ENCODE measurements at regions of chr2 and their contacts with region 1.

Region 1: GRCh38 chr2:135203944-135204343 is 151.9 kb downstream of the RAB3GAP1 start:
- DNase-seq: no peak
- ATAC-seq: no peak
- H3K4me3 ChIP-seq: no peak overlapping the region
- H3K27ac ChIP-seq: no peak overlapping the region
- H3K4me1 ChIP-seq: no peaks in the 10 kb centered on the region
- H3K27me3 ChIP-seq: no peaks in the 10 kb centered on the region
- CTCF ChIP-seq: no peak

Region 2: GRCh38 chr2:135154962-135155361 is 49.0 kb before region 1 on chr2:
- CTCF ChIA-PET with region 1: no interaction called
- POLR2A ChIA-PET with region 1: interaction called, 10 read pairs
- in situ Hi-C with region 1: no loop called
- intact Hi-C with region 1: no loop called
- DNase-seq: no peak
- ATAC-seq: no peak
- H3K4me3 ChIP-seq: no peak overlapping the region
- H3K27ac ChIP-seq: no peak overlapping the region
- H3K4me1 ChIP-seq: no peaks in the 10 kb centered on the region
- H3K27me3 ChIP-seq: no peaks in the 10 kb centered on the region
- CTCF ChIP-seq: no peak

Measured in Panc1 (cell line).